Transverse colon (tissue), 4 donors: ENCODE measurements at regions of chr1 and their contacts with region 1.

Region 1: GRCh38 chr1:18921516-18922251 is 19.3 kb upstream of the ALDH4A1 start:
- DNase-seq: no peak
- H3K4me3 ChIP-seq: no peak overlapping the region
- H3K27ac ChIP-seq: peak overlapping the region; percentile 77 to 91 (median 85)
- H3K4me1 ChIP-seq: peaks cover 28 to 40% (median 35%) of the 10 kb centered on the region in 4 donors
- H3K27me3 ChIP-seq: no peaks in the 10 kb centered on the region
- CTCF ChIP-seq: peak in 4 of 5 experiments; percentile 14 to 46 (median 26)
- EP300 ChIP-seq: no peak
- POLR2A ChIP-seq: no peak

Region 2: DNA sequence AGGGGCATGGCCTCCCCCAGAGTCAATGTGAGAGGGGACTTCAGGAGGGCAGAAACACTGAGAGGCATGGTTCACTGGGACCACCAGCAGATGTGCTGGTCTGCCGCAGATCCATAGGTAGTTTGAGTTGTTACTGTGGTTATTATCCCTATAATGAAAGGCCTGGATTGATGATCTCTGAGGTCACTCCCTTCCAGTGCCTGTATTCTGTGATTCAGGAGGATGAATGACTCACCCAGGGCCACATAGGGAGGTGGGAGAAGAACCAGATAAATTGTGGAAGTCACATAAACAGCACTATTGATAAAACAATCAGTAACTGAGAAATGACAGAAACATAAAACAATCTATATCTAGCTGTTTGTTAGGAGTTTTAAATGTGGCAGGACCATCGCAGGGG is 1189.2 kb before region 1 on chr1:
- in situ Hi-C with region 1: no loop called
- intact Hi-C with region 1: no loop called
- DNase-seq: no peak
- H3K4me3 ChIP-seq: no peak overlapping the region
- H3K27ac ChIP-seq: no peak overlapping the region
- H3K4me1 ChIP-seq: no peaks in the 10 kb centered on the region
- H3K27me3 ChIP-seq: peaks cover 7% of the 10 kb centered on the region
- CTCF ChIP-seq: no peak
- EP300 ChIP-seq: no peak
- POLR2A ChIP-seq: no peak

Region 3: GRCh38 chr1:18948913-18949685 is 27.4 kb after region 1 on chr1:
- in situ Hi-C with region 1: no loop called
- intact Hi-C with region 1: loop called (anchors 1 kb)
- DNase-seq: no peak
- H3K4me3 ChIP-seq: peak overlapping the region in 1 of 4 donors; percentile 37
- H3K27ac ChIP-seq: peak overlapping the region; percentile 83 to 91 (median 86)
- H3K4me1 ChIP-seq: peaks cover 46 to 85% (median 69%) of the 10 kb centered on the region in 4 donors
- H3K27me3 ChIP-seq: no peaks in the 10 kb centered on the region
- CTCF ChIP-seq: peak in 2 of 5 experiments; percentile 1 to 8
- EP300 ChIP-seq: no peak
- POLR2A ChIP-seq: no peak